Colonic mucosa (tissue), 4 donors: ENCODE measurements at regions of chr5 and their contacts with region 1.

Region 1: DNA sequence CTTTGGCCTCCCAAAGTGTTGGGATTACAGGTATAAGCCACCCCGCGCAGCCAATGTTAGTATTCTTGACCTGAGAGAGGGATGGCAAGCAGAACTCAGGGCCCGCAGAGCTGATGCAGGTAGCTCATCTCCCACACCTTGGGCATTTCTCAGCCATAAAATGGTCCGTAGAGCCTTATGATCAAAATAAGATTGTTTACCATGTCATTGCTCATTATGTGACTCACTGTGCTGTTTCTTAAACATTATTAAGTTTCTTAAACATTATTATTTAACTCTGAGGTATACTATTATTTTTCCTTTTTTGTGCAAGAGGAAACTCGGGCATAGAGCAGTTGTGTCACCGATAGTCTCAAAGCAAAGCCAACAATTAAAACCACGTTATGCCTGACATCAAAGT is 42.4 kb upstream of the POU4F3 start:
- DNase-seq: no peak
- H3K4me3 ChIP-seq: no peak overlapping the region
- H3K27ac ChIP-seq: no peak overlapping the region
- H3K4me1 ChIP-seq: no peaks in the 10 kb centered on the region
- H3K27me3 ChIP-seq: no peaks in the 10 kb centered on the region
- CTCF ChIP-seq: no peak

Region 2: GRCh38 chr5:146426853-146427618 is 130.8 kb after region 1 on chr5:
- intact Hi-C with region 1: loop called (anchors 5 kb)
- DNase-seq: no peak
- H3K4me3 ChIP-seq: no peak overlapping the region
- H3K27ac ChIP-seq: no peak overlapping the region
- H3K4me1 ChIP-seq: no peaks in the 10 kb centered on the region
- H3K27me3 ChIP-seq: no peaks in the 10 kb centered on the region
- CTCF ChIP-seq: peak; percentile 57